Panc1 (cell line): ENCODE measurements at regions of chr4 and their contacts with region 1.

Region 1: DNA sequence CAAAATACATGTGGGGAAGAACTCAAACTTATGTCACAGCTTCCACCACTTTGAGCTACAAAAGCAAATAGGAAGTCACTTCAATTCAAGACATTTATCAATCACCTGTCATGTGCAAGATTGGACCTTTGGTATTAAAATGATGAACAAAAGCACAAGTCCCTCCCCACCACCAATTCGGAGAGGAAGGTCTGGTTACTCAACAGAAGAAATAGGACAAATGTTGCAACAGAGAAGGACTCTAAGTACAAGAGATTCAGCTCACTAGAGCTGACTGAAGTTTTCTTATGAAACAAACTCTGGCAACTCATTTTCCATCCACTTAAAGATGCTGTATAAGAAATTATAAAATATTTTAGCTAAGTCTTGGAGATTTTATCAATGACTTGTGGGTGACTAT is 16.0 kb upstream of the MMRN1 start:
- DNase-seq: no peak
- ATAC-seq: no peak
- H3K4me3 ChIP-seq: no peak overlapping the region
- H3K27ac ChIP-seq: no peak overlapping the region
- H3K4me1 ChIP-seq: no peaks in the 10 kb centered on the region
- H3K27me3 ChIP-seq: no peaks in the 10 kb centered on the region
- CTCF ChIP-seq: no peak

Region 2: DNA sequence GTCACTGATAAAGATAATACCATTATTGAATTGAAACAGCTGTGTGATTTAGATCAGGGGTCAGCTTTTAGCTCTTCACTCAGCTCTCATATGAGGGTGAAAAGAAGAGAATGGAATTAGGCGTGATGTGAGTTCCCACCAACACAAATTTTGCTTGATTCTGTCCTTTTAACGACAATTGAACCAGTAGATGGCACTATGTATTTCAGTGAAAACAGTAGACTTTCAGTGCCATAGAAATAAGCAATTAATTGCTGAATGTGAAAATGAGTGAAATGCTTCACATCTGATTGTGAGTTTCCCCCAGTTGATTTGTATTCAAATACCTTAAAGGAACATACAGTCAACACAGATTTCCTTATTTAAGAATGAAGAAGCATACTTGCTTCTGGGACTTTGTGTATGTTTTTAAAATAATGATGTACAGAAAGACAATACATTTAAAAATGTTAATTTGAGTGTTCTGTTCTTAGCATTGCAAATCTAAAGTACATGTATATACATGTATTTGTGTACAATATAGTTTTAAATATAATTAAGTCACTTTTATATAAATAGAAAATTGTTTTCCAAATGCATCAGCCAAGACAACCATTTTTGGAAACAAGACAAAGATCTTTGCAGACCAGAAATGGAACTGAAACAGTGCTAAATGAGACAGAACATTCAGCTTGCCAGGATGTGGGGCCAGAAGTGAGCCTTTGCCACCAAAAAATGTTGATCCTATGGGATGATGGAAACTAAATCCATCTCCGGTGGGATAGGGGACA is 220.5 kb before region 1 on chr4:
- CTCF ChIA-PET with region 1: no interaction called
- POLR2A ChIA-PET with region 1: no interaction called
- in situ Hi-C with region 1: no loop called
- intact Hi-C with region 1: loop called (anchors 10 kb)
- DNase-seq: no peak
- ATAC-seq: no peak
- H3K4me3 ChIP-seq: no peak overlapping the region
- H3K27ac ChIP-seq: no peak overlapping the region
- H3K4me1 ChIP-seq: no peaks in the 10 kb centered on the region
- H3K27me3 ChIP-seq: no peaks in the 10 kb centered on the region
- CTCF ChIP-seq: peak; percentile 20; the same call in 1 of the 2 replicates

Region 3: DNA sequence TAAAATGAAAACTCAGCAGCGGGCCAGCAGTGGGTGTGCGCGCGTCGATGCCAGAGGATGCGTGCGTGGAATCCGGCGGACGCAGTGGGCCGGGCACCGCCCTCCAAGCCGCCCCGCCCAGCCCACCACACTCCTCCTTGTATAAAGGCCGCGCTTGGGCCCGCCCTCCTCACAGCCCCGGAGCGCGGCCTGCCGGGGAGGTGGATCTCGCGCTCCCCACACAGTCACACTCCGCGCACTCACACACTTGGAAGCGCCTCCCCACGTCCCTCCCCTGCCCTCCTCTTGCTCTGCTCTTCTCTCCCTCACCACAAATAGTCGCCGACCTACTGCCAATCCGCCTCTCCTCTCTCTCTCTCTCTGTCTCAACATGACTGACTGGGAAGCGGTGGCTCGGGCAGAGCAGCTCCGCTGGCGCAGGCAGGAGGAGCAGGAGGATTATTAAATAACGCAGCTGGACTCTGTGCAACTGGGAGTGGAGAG is 248.7 kb after region 1 on chr4 and contains the start of gene CCSER1:
- CTCF ChIA-PET with region 1: no interaction called
- POLR2A ChIA-PET with region 1: no interaction called
- in situ Hi-C with region 1: no loop called
- intact Hi-C with region 1: no loop called
- DNase-seq: no peak
- ATAC-seq: peak; percentile 88
- H3K4me3 ChIP-seq: peak within 1 kb of the TSS; percentile 37 to 55
- H3K27ac ChIP-seq: no peak within 1 kb of the TSS
- H3K4me1 ChIP-seq: no peaks in the 10 kb centered on the region
- H3K27me3 ChIP-seq: peaks cover 2% of the 10 kb centered on the region
- CTCF ChIP-seq: no peak
- total RNA-seq, gene CCSER1: 0.05 TPM